MCF 10A (cell line): ENCODE measurements at regions of chr4 and their contacts with region 1.

Region 1: DNA sequence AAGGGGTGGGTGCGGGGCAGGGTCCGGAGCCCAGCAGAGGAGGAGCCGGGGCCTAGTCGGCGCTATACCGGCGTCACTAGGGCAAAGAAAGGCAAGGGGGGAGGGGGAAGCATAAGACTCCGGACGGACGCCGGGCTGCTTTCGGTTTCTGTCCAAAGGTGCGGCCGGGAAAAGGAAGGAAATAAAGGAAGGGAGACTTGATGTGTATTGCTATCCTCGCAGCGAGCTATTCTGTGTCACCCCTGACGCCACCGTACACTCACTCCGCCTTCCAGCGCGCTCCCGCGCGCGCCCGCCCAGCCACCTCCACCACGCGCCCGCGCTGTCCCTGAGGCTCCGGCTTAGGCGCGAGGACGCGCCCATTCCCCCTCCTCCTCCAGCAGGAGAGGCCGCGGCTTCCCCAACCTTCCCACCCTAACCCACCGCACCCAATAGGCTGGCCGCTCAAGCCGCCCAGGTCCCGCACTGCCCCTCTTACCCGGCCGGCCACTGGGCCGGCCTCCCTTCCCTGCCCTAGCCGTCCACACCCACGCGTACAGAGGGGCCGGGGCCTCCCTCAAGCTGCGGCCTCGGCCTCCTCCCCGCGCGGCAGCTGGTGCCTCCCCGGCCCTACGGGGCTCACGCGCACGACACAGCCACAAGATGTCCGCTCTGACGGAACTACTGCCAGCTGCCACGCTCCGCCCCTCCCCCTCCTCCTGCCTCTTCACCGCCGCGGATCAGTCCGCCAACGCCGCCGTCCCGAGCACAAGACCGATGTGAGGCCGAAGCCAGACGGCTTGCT is at the start of gene UBE2D3:
- DNase-seq: peak; percentile 90
- H3K4me3 Mint-ChIP-seq: no peak within 1 kb of the TSS
- H3K27ac Mint-ChIP-seq: no peak within 1 kb of the TSS
- H3K4me1 Mint-ChIP-seq: peaks cover 11% of the 10 kb centered on the region
- H3K27me3 Mint-ChIP-seq: no peaks in the 10 kb centered on the region
- CTCF ChIP-seq: no peak
- total RNA-seq, gene UBE2D3: 505 and 547 TPM in 2 replicates

Region 2: GRCh38 chr4:101515099-101515498 is 1312.0 kb before region 1 on chr4:
- CTCF ChIA-PET with region 1: no interaction called
- POLR2A ChIA-PET with region 1: no interaction called
- intact Hi-C with region 1: no loop called
- DNase-seq: no peak
- H3K4me3 Mint-ChIP-seq: no peak overlapping the region
- H3K27ac Mint-ChIP-seq: no peak overlapping the region
- H3K4me1 Mint-ChIP-seq: no peaks in the 10 kb centered on the region
- H3K27me3 Mint-ChIP-seq: no peaks in the 10 kb centered on the region
- CTCF ChIP-seq: no peak

Region 3: GRCh38 chr4:102449751-102450352 is 377.2 kb before region 1 on chr4:
- CTCF ChIA-PET with region 1: no interaction called
- POLR2A ChIA-PET with region 1: no interaction called
- intact Hi-C with region 1: loop called (anchors 5 kb)
- DNase-seq: peak; percentile 72
- H3K4me3 Mint-ChIP-seq: no peak overlapping the region
- H3K27ac Mint-ChIP-seq: no peak overlapping the region
- H3K4me1 Mint-ChIP-seq: no peaks in the 10 kb centered on the region
- H3K27me3 Mint-ChIP-seq: no peaks in the 10 kb centered on the region
- CTCF ChIP-seq: peak; percentile 63

Region 4: GRCh38 chr4:102589743-102590142 is 237.3 kb before region 1 on chr4:
- CTCF ChIA-PET with region 1: no interaction called
- POLR2A ChIA-PET with region 1: no interaction called
- intact Hi-C with region 1: no loop called
- DNase-seq: no peak
- H3K4me3 Mint-ChIP-seq: no peak overlapping the region
- H3K27ac Mint-ChIP-seq: no peak overlapping the region
- H3K4me1 Mint-ChIP-seq: peaks cover 13% of the 10 kb centered on the region
- H3K27me3 Mint-ChIP-seq: no peaks in the 10 kb centered on the region
- CTCF ChIP-seq: no peak

Region 5: GRCh38 chr4:102620697-102621497 is 206.2 kb before region 1 on chr4:
- CTCF ChIA-PET with region 1: interaction called, 13 read pairs
- POLR2A ChIA-PET with region 1: interaction called, 19 read pairs
- intact Hi-C with region 1: loop called (anchors 1 kb)
- DNase-seq: peak; percentile 77
- H3K4me3 Mint-ChIP-seq: peak overlapping the region; percentile 44
- H3K27ac Mint-ChIP-seq: no peak overlapping the region
- H3K4me1 Mint-ChIP-seq: peaks cover 8% of the 10 kb centered on the region
- H3K27me3 Mint-ChIP-seq: no peaks in the 10 kb centered on the region
- CTCF ChIP-seq: peak; percentile 59

Region 6: GRCh38 chr4:102780476-102781144 is 46.5 kb before region 1 on chr4:
- CTCF ChIA-PET with region 1: no interaction called
- POLR2A ChIA-PET with region 1: interaction called, 17 read pairs
- intact Hi-C with region 1: no loop called
- DNase-seq: peak; percentile 73
- H3K4me3 Mint-ChIP-seq: no peak overlapping the region
- H3K27ac Mint-ChIP-seq: no peak overlapping the region
- H3K4me1 Mint-ChIP-seq: peaks cover 10% of the 10 kb centered on the region
- H3K27me3 Mint-ChIP-seq: no peaks in the 10 kb centered on the region
- CTCF ChIP-seq: no peak

Region 7: DNA sequence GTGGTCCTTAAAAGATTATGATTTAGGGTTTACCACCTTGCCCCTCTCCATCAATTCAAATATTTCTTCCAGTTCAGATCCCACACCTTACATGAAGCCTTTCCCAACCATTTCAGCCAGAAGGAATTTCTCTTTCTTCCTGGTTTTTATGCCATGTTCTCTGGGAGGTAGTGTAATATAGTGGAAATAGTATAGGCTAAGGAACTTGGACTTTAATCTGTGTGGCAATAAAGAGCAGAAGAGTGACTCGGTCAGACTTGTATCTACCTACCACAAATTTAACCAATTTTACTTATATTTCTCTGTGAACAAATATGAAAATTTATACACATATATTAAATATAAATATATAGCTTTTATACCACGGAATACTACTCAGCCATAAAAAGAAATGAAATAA is 23.3 kb after region 1 on chr4:
- CTCF ChIA-PET with region 1: no interaction called
- POLR2A ChIA-PET with region 1: interaction called, 20 read pairs
- intact Hi-C with region 1: no loop called
- DNase-seq: no peak
- H3K4me3 Mint-ChIP-seq: no peak overlapping the region
- H3K27ac Mint-ChIP-seq: no peak overlapping the region
- H3K4me1 Mint-ChIP-seq: no peaks in the 10 kb centered on the region
- H3K27me3 Mint-ChIP-seq: no peaks in the 10 kb centered on the region
- CTCF ChIP-seq: no peak

Region 8: DNA sequence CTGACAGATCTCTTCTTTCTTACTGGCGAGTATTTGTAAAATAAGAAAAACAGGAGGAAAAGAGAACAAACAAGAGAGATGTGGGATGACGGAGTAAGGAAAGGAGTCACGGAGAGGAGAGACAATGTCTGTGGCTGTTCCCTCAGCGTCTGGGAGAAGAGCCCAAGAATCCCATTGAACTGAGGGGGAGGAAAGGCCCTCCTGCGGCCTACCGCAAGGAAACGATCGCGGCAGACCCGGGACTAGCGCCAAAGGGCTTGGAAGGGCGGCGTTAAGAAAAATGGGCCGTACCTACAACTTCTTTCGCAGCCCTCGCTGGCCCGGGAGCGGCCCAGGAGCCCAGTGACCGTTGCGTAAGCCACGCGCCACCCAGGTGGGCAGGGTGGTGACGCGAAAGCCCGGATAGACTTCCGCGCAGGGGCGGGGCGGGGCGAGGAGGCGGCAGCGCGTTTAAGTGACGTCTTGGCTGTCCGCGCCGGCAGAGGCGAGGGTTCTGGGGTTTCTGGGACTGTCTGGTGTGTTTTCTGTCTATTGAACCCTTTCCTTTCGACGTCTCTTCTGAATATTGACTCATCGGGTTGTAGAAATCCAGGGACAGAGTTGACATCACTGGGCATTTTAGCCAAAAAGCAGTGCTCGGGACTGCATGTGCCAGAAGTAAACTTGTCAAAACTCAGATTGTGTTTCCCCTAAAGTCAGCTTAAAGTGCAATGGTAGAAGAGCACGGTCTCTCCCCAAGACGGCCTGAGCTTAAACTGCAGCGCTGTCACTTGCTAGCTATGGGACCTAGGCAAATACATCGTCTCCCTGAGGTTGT is 192.4 kb after region 1 on chr4 and contains the start of gene SLC9B1:
- CTCF ChIA-PET with region 1: no interaction called
- POLR2A ChIA-PET with region 1: interaction called, 14 read pairs
- intact Hi-C with region 1: no loop called
- DNase-seq: peak; percentile 98
- H3K4me3 Mint-ChIP-seq: peak within 1 kb of the TSS; percentile 72
- H3K27ac Mint-ChIP-seq: peak within 1 kb of the TSS; percentile 97
- H3K4me1 Mint-ChIP-seq: no peaks in the 10 kb centered on the region
- H3K27me3 Mint-ChIP-seq: no peaks in the 10 kb centered on the region
- CTCF ChIP-seq: no peak
- total RNA-seq, gene SLC9B1: 0.77 and 0.86 TPM in 2 replicates